PC-3 (cell line): ENCODE measurements at regions of chr2 and their contacts with region 1.

Region 1: DNA sequence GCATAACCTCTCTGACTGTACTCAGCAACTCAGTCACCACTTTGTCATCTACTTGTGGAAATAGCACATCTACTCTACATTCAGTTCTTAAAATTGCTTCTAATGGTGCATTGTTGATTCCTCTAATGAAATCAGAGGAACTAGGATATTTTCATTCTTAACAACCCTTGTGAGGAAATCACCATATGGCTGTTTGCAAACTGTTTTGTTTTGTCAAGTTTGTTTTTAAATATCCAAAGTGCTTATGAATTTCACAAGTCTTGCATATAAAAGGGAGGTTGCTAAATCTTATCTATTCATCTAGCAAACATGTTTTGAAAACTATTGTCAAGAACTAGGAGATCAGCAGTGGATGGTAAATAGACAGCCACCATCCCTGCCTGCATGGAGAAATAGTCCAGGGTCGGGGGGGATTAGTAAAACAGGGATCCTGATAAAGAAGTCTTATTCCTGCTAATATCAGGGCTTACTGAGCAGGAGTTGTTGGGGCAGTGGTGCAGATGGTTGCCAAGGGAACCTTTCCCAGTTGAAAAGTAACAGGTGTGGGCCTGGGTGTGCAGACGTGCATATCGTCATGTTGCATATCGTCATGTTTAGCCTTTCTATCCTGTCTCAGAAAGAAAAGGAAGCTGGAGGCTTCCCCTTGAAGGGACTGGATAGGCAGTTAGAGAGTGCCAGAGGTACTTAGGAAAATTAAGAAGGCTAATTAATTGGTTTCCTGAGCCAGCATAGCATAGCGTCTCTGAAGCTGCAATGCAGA is 7.5 kb upstream of the MYO3B start:
- DNase-seq: no peak
- ATAC-seq: no peak
- H3K4me3 ChIP-seq: no peak overlapping the region
- H3K27ac ChIP-seq: no peak overlapping the region
- H3K4me1 ChIP-seq: peaks cover 3% of the 10 kb centered on the region
- H3K27me3 ChIP-seq: no peaks in the 10 kb centered on the region
- CTCF ChIP-seq: no peak

Region 2: GRCh38 chr2:170185319-170185718 is 14.9 kb after region 1 on chr2:
- CTCF ChIA-PET with region 1: no interaction called
- POLR2A ChIA-PET with region 1: interaction called, 10 read pairs
- intact Hi-C with region 1: no loop called
- DNase-seq: no peak
- ATAC-seq: no peak
- H3K4me3 ChIP-seq: no peak overlapping the region
- H3K27ac ChIP-seq: no peak overlapping the region
- H3K4me1 ChIP-seq: no peaks in the 10 kb centered on the region
- H3K27me3 ChIP-seq: no peaks in the 10 kb centered on the region
- CTCF ChIP-seq: no peak

Region 3: DNA sequence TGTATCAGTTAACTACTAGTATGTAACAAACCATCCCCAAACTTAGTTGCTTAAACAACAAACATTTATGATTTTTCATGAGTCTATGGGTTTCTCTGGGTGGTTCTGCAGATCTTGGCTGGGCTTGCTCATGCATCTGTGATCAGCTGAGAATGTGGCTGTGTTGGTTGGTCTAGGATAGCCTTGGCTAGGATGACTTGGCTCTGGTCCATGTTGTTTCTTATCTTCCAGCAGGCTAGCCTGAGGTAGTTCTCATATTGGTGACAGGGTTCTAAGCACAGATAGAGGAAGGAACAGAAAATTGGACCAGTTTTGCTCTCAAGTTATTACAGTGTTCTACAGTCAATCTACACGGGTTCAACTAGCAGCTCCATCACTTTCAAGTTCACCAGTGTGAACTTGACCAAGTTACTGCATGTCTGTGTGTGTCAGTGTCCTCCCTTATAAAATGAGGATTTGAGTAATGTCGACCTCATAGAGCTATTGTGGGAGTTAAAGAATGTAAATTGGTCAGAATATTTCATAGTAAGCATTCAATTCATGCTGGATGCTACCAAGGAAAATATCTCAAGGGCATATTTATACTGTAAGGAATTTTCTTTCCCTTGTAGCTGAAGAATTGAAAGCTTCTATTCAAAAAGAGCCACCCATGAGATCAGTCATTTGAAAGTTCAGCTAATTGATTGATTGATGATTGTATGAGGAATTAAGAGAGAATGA is 72.8 kb after region 1 on chr2:
- CTCF ChIA-PET with region 1: no interaction called
- POLR2A ChIA-PET with region 1: no interaction called
- intact Hi-C with region 1: no loop called
- DNase-seq: no peak
- ATAC-seq: no peak
- H3K4me3 ChIP-seq: no peak overlapping the region
- H3K27ac ChIP-seq: no peak overlapping the region
- H3K4me1 ChIP-seq: peaks cover 13% of the 10 kb centered on the region
- H3K27me3 ChIP-seq: no peaks in the 10 kb centered on the region
- CTCF ChIP-seq: no peak